Panc1 (cell line): ENCODE measurements at regions of chr7 and their contacts with region 1.

Region 1: DNA sequence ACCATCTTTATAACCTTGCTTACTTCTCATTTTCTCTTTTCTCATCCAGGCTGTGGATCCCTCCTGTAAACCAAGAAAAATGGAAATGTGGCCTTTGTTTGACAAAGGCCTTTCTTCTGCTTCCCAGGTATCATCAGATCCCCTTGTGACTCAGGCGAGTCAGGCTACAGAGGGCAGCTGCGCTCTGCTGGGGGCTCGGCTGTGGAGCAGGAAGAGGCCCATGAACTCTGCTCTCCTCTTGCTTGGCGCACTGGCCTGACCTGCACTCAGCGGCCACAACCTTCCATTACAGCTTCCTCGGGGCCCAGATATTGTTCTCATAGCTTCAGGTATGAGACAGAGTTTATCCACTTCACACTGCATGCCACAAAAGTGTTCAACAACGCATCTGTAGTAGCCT is 457.6 kb upstream of the COBL start:
- DNase-seq: no peak
- ATAC-seq: no peak
- H3K4me3 ChIP-seq: no peak overlapping the region
- H3K27ac ChIP-seq: no peak overlapping the region
- H3K4me1 ChIP-seq: no peaks in the 10 kb centered on the region
- H3K27me3 ChIP-seq: no peaks in the 10 kb centered on the region
- CTCF ChIP-seq: no peak

Region 2: GRCh38 chr7:51645702-51646298 is 128.4 kb before region 1 on chr7:
- CTCF ChIA-PET with region 1: no interaction called
- POLR2A ChIA-PET with region 1: interaction called, 11 read pairs
- in situ Hi-C with region 1: no loop called
- intact Hi-C with region 1: no loop called
- DNase-seq: no peak
- ATAC-seq: no peak
- H3K4me3 ChIP-seq: no peak overlapping the region
- H3K27ac ChIP-seq: no peak overlapping the region
- H3K4me1 ChIP-seq: no peaks in the 10 kb centered on the region
- H3K27me3 ChIP-seq: no peaks in the 10 kb centered on the region
- CTCF ChIP-seq: no peak